Activated T-helper 1 cell treated with anti-CD3 and anti-CD28 coated beads, Interleukin-12 subunit alpha, Interleukin-12 subunit beta, Interleukin-2, Interleukin-4 antibody, amounts not matched to agents 30 ng/mL and 10 ng/mL and 1 ng/mL, durations not matched to agents 14 hours and 24 hours and 36 hours (primary cell): ENCODE measurements at regions of chr9 and their contacts with region 1.

Region 1: DNA sequence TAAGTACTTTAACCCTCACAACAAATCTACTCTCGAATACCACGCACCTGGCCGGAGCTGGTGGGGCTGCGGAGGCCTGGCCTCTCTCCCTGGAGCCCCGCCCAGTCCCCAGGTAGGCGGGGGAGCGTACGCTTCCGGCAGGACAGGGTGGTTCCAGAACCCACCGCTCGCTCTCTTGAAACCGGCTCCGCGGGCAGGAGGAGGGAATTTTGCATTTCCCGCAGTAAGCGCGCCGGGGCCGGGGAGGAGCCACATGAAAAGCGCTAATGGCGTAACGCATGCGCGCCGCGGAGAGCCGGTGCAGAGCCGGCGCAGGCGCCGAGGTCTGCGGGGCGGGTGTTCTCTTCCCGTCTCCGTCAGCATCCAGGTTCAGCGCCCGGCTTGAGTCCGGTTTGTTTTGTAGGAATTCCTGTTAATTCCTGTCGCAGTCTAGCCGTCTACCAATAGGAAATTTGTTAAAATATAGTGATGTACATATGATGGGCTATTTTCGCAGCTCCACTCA is 20.8 kb downstream of the CAVIN4 start:
- DNase-seq: peak; percentile 70
- H3K4me3 Mint-ChIP-seq: peak overlapping the region; percentile 78
- H3K27ac Mint-ChIP-seq: no peak overlapping the region
- H3K4me1 Mint-ChIP-seq: peaks cover 15% of the 10 kb centered on the region
- H3K27me3 Mint-ChIP-seq: peaks cover 20% of the 10 kb centered on the region

Region 2: DNA sequence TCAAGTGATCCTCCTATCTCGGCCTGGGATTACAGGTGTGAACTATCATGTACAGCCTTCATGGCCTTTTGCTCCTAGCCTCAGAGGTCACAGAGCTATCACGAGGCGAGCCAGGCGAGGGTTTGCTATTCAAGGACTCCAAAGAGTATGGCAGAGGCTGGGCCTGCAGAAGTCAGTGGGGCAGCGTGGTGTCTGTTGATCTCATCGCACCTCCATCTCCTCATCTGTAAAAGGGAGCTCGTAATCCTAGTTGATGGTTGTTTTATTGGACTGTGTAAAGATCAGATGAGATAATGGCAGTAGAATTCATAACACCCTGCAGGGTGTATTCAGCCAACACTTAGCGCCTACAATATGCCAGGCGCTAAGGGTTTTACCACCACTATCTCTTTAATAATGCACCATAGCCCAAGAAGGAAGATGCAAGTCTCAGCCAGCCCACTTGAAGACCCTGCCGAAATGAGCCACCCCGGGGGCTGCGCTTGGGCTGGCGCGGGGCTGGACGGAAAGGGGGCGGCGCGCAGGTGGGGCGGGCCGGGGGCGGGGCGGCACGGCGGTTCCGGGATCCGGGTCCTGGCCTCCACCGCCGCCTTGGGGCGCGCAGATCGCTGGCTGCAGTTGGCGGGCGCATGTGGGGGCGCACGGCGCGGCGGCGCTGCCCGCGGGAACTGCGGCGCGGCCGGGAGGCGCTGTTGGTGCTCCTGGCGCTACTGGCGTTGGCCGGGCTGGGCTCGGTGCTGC is 1791.5 kb before region 1 on chr9 and contains the start of gene GALNT12:
- intact Hi-C with region 1: loop called (anchors 5 kb)
- DNase-seq: peak; percentile 21
- H3K4me3 Mint-ChIP-seq: peak within 1 kb of the TSS; percentile 86
- H3K27ac Mint-ChIP-seq: no peak within 1 kb of the TSS
- H3K4me1 Mint-ChIP-seq: peaks cover 12% of the 10 kb centered on the region
- H3K27me3 Mint-ChIP-seq: peaks cover 57% of the 10 kb centered on the region
- total RNA-seq, gene GALNT12: 2.3 and 2.5 TPM in 2 replicates

Region 3: GRCh38 chr9:99221621-99222415 is 1376.9 kb before region 1 on chr9 and contains the starts of genes ALG2 and SEC61B:
- intact Hi-C with region 1: loop called (anchors 5 kb)
- DNase-seq: peak; percentile 89
- H3K4me3 Mint-ChIP-seq: peak within 1 kb of the TSS; percentile 99
- H3K27ac Mint-ChIP-seq: peak within 1 kb of the TSS; percentile 98
- H3K4me1 Mint-ChIP-seq: peaks cover 67% of the 10 kb centered on the region
- H3K27me3 Mint-ChIP-seq: no peaks in the 10 kb centered on the region
- total RNA-seq, gene ALG2: 37.6 and 39.7 TPM in 2 replicates
- total RNA-seq, gene SEC61B: 180 and 184 TPM in 2 replicates

Region 4: GRCh38 chr9:100028201-100028784 is 570.4 kb before region 1 on chr9:
- intact Hi-C with region 1: loop called (anchors 1 kb)
- DNase-seq: peak; percentile 43
- H3K4me3 Mint-ChIP-seq: no peak overlapping the region
- H3K27ac Mint-ChIP-seq: no peak overlapping the region
- H3K4me1 Mint-ChIP-seq: peaks cover 14% of the 10 kb centered on the region
- H3K27me3 Mint-ChIP-seq: no peaks in the 10 kb centered on the region

Region 5: DNA sequence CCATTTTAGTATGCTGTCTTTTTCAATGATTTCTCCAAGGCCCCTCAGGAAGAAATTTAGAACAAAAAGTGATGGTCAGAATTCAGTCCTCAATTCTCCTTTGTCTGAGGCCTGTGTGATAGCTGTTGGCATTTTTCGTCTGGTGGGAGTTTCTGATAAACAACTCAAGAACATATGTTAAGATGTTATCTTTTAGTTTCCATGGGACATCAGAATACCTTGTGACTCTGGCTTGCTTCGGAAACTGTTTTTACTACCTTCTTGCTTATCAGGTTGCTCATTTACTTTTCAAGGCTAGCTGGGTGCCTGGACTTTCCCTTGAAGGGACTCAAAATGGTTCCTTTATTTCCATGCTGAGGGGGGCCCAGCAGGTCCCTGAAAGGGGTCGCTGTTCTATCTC is 402.5 kb before region 1 on chr9:
- intact Hi-C with region 1: no loop called
- DNase-seq: no peak
- H3K4me3 Mint-ChIP-seq: no peak overlapping the region
- H3K27ac Mint-ChIP-seq: no peak overlapping the region
- H3K4me1 Mint-ChIP-seq: no peaks in the 10 kb centered on the region
- H3K27me3 Mint-ChIP-seq: no peaks in the 10 kb centered on the region

Region 6: GRCh38 chr9:100322954-100323536 is 275.6 kb before region 1 on chr9:
- intact Hi-C with region 1: loop called (anchors 2 kb)
- DNase-seq: no peak
- H3K4me3 Mint-ChIP-seq: no peak overlapping the region
- H3K27ac Mint-ChIP-seq: no peak overlapping the region
- H3K4me1 Mint-ChIP-seq: peaks cover 5% of the 10 kb centered on the region
- H3K27me3 Mint-ChIP-seq: no peaks in the 10 kb centered on the region

Region 7: GRCh38 chr9:100426530-100427428 is 171.9 kb before region 1 on chr9 and contains the start of gene MSANTD3:
- intact Hi-C with region 1: loop called (anchors 5 kb)
- DNase-seq: peak; percentile 28
- H3K4me3 Mint-ChIP-seq: peak within 1 kb of the TSS; percentile 87
- H3K27ac Mint-ChIP-seq: peak within 1 kb of the TSS; percentile 91
- H3K4me1 Mint-ChIP-seq: peaks cover 21% of the 10 kb centered on the region
- H3K27me3 Mint-ChIP-seq: peaks cover 10% of the 10 kb centered on the region
- total RNA-seq, gene MSANTD3: 11.1 and 11.3 TPM in 2 replicates

Region 8: DNA sequence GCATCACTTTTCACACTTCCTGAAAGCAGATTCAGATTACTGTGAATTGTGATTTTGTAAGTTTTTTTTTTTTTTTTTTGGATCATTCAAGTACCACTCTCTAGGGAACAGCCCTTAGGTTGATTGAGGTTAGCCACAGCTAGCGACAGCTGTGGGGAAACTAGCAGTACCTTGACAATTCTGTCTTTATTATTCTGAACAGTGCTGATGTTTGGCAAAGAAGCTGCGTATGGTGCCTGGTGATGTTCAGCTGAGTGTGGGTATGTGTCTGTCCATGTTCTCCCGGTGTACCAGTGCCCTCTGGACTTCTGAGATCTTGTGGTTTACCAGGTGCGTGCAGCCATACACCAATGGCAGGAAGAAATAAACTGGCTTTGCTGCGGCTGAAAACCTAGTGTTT is 312.6 kb after region 1 on chr9:
- intact Hi-C with region 1: no loop called
- DNase-seq: no peak
- H3K4me3 Mint-ChIP-seq: no peak overlapping the region
- H3K27ac Mint-ChIP-seq: no peak overlapping the region
- H3K4me1 Mint-ChIP-seq: no peaks in the 10 kb centered on the region
- H3K27me3 Mint-ChIP-seq: no peaks in the 10 kb centered on the region

Region 9: GRCh38 chr9:101530077-101530711 is 931.5 kb after region 1 on chr9:
- intact Hi-C with region 1: loop called (anchors 5 kb)
- DNase-seq: peak; percentile 58
- H3K4me3 Mint-ChIP-seq: no peak overlapping the region
- H3K27ac Mint-ChIP-seq: no peak overlapping the region
- H3K4me1 Mint-ChIP-seq: peaks cover 23% of the 10 kb centered on the region
- H3K27me3 Mint-ChIP-seq: peaks cover 12% of the 10 kb centered on the region